ENCODE measurements at regions of chr5 and their contacts with region 1.

Region 1: DNA sequence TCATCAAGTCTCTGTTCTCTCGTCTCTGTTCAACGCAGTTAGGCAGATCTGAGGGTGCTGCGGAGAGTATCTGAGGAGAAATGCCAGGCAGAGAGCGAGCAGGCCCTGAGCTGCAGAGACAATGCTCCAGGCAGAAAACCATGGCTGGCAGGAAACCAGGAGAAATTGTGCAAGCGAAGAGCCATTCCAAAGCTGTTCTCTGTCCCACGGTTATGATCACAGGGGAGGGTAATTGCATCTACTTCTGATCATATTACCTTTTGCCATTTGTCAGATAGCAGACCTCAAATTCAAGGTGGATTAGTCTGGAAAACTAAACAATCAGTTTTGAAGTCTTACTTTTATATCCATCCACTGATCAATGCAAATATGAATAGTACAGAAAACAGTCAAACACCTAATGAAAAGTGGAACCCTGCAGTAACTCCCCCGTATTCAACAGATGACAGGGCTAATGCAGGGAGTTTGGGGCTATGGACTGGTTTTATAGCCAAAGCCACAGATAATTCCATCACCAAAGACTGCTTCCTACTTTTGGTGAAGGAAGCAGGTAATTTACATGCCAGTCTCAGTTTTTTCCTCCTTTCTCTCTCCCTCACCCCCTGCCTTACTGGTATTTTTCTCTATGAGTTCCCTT is 228.0 kb downstream of the DCP2 start:
- DNase-seq: peak; percentile 58
- ATAC-seq: peak; percentile 35 to 55

Region 2: DNA sequence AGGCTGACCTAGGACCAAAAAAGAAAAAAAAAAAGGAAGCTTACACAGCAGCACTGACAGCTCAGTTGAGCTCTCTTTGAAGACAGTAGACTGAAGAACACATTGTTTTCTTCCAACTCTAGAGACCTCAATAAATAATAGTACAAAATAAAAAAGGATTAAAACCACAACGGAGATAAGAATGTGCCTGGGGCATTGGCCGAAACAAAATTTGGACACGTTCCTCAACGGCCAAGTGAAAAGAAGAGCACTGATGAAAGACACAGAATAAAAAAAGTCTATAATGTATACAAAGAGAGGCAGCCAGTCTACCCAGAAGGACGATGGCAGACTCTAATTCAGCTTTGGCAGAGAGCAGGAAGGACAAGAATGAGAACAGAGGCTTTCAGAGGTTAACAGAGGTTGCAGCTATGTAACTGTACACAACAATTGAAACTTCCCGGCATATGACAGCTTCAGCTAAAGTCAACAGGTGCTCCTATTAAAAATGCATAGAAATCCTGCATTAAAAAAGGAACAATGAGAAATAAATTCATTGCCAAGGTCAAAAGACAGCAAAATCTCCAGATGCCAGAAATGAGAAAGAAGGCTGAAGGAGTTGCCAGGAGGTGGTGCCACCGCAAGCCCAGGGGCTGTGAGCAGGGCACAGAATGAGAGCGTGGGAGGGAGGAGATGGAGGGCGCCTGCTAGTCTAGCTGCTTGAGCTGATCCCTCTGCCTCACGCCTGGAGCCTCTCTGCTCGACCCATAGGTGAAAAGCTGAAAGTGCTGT is 114.1 kb before region 1 on chr5:
- intact Hi-C with region 1: loop called in 1 of 2 experiments (anchors 5 kb)
- DNase-seq: no peak
- ATAC-seq: peak; percentile 44 to 53

Region 3: DNA sequence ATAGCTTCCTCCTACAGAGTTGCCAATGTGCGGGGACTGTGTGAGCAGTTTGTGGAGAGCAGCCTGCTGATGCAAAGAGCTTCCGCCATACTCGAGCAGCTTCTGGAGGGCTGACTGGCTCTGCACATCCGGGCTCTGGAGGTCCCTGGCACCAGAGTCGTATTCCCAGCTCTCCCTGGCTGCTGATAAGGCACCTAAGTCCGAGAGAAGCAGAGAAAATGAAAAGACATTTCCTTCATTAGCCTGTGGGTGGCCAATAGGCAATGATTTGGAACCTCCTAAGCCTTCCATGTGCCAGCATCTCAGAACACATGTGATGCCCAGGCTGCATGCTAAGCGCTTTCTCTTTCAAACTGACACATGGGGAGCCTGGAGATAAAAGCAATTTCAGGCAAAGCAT is 135.9 kb after region 1 on chr5:
- intact Hi-C with region 1: no loop called
- DNase-seq: peak; percentile 52
- ATAC-seq: peak; percentile 38 to 62

Region 4: GRCh38 chr5:113404269-113404668 is 199.6 kb after region 1 on chr5:
- intact Hi-C with region 1: no loop called
- DNase-seq: no peak
- ATAC-seq: no peak